PC-9 (cell line): ENCODE measurements at regions of chr12 and their contacts with region 1.

Region 1: DNA sequence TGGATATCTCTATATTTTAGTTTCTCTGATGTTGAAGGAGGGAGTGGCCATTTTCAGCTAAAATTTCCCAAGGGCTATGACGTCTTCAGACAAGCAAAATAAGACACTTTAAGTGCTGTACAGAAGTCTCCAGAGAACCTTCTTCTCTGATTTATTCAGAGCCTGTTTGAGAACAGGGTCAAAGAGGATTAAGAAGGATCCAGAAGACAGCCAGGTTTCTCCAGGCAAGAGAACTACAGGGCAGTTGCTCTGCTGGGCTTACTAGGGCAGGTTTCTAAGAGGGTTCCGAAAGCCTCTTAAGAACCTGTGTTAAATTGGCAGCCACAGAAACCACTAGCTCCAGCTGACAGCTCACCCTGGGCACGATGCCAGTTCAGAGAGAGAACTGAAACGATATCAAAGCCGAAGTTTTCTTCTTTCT is 1.2 kb downstream of the MGP start:
- DNase-seq: peak; percentile 57 to 69
- H3K4me3 ChIP-seq: peak overlapping the region; percentile 52
- H3K27ac ChIP-seq: peak overlapping the region; percentile 59
- H3K4me1 ChIP-seq: peaks cover 48% of the 10 kb centered on the region
- H3K27me3 ChIP-seq: no peaks in the 10 kb centered on the region
- CTCF ChIP-seq: no peak

Region 2: GRCh38 chr12:14952299-14952921 is 67.9 kb after region 1 on chr12:
- CTCF ChIA-PET with region 1: interaction called, 3 read pairs
- POLR2A ChIA-PET with region 1: no interaction called
- intact Hi-C with region 1: loop called (anchors 2 kb)
- DNase-seq: peak; percentile 64 to 98
- H3K4me3 ChIP-seq: 0 out of 2 replicates have a peak overlapping the region, but pooled peaks have one; percentile 0
- H3K27ac ChIP-seq: peak overlapping the region; percentile 83
- H3K4me1 ChIP-seq: peaks cover 72% of the 10 kb centered on the region
- H3K27me3 ChIP-seq: no peaks in the 10 kb centered on the region
- CTCF ChIP-seq: no peak

Region 3: DNA sequence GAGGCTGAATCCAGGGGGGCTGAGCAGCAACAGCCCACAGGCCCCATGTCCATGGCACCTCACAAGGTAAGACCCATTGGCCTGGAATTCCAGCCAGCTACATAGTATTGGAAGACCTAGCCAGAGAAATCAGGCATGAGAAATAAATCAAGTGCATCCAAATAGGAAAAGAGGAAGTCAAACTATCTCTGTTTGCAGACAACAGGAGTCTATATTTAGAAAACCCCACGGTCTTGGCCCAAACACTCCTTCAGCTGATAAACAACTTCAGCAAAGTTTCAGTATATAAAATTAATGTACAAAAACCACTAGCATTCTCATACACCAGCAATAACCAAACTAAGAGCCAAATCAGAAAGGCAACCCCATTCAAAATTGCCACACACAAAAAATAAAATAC is 105.3 kb after region 1 on chr12:
- CTCF ChIA-PET with region 1: no interaction called
- POLR2A ChIA-PET with region 1: no interaction called
- intact Hi-C with region 1: no loop called
- DNase-seq: no peak
- H3K4me3 ChIP-seq: no peak overlapping the region
- H3K27ac ChIP-seq: no peak overlapping the region
- H3K4me1 ChIP-seq: peaks cover 2% of the 10 kb centered on the region; the same call in 1 of the 2 replicates
- H3K27me3 ChIP-seq: no peaks in the 10 kb centered on the region
- CTCF ChIP-seq: no peak